Activated CD8-positive, alpha-beta T cell treated with anti-CD3 and anti-CD28 coated beads for 36 hours (primary cell): ENCODE measurements at regions of chr19 and their contacts with region 1.

Region 1: DNA sequence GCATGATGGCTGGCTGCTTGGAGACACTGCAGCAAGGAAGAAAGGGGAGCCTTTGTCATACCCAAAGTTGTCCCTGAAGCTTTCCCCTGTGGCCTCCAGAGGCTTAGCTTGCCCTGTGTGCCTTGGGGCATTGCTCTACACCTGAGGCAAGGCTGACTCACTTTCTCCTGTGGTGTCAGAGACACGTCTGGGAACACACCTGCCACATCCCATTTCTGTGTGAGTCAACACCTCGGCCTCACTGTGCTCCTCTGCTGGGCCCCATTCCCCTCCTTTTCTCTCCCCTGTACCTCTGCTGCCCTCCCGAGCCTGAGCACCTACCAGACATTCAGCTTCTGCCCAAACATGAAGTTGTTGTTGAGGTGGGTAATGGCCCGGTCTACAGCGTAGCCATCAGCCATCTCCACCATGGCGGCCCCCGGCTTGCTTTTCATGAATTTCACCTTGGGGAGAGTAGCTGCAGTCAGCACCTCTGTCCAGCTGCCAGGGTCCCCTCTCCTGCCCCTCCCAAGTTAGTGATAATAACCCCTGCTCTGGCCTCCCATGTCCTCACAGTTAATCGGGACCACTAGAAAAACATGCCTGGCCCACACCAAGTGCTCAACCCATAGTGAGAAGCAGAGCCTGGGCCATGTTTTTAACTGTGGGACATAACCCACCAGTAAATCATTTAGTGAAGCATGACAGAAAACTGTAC is 7.1 kb upstream of the ECH1 start:
- DNase-seq: peak; percentile 81
- ATAC-seq: peak; percentile 62
- H3K4me3 Mint-ChIP-seq: no peak overlapping the region
- H3K27ac Mint-ChIP-seq: peak overlapping the region; percentile 92
- H3K4me1 Mint-ChIP-seq: peaks cover 57% of the 10 kb centered on the region
- H3K27me3 Mint-ChIP-seq: no peaks in the 10 kb centered on the region
- CTCF ChIP-seq: no peak

Region 2: DNA sequence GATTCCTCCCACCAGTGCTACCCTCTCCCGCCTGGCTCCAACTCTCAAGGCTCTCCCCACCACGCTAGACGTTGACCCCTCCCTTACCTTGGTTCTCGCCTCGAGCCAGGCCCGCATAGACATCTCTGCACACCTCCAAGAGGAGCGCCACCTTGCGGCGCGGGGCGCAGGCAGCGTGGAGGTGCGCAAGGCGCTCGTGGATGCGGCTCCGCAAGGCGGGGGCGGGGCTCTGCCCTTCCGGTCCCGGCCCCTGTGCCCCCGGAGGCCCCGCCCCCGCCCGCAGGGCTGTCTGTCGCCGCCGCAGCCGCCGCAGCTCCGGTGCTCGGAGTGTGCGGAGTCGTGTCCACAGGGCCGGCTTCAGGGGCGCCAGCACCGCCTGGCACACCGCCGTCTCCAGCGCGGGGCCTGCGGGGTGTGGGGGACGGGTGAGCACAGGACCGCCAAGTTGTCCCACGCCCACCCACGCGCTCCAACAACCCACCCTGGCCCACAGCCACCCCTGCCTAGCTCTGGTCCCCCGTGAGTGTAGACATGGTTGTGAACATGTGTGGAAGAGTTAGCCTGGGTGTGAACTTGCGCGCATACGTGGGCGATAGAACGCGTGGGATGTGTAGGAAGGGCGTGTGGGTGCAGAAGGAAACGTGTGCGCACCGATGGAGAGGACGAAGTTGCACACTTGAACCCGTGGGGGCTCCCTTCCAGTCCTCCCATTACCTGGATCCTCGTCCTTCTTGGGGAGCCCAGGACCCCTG is 31.3 kb after region 1 on chr19:
- CTCF ChIA-PET with region 1: interaction called, 4 read pairs
- POLR2A ChIA-PET with region 1: interaction called, 22 read pairs
- intact Hi-C with region 1: no loop called
- DNase-seq: peak; percentile 95
- ATAC-seq: peak; percentile 83
- H3K4me3 Mint-ChIP-seq: peak overlapping the region; percentile 85
- H3K27ac Mint-ChIP-seq: peak overlapping the region; percentile 92
- H3K4me1 Mint-ChIP-seq: peaks cover 43% of the 10 kb centered on the region
- H3K27me3 Mint-ChIP-seq: no peaks in the 10 kb centered on the region
- CTCF ChIP-seq: peak; percentile 90

Region 3: GRCh38 chr19:38877781-38878574 is 39.3 kb after region 1 on chr19 and contains the start of gene RINL:
- CTCF ChIA-PET with region 1: no interaction called
- POLR2A ChIA-PET with region 1: interaction called, 15 read pairs
- intact Hi-C with region 1: no loop called
- DNase-seq: peak; percentile 86
- ATAC-seq: peak; percentile 93
- H3K4me3 Mint-ChIP-seq: peak within 1 kb of the TSS; percentile 95
- H3K27ac Mint-ChIP-seq: peak within 1 kb of the TSS; percentile 98
- H3K4me1 Mint-ChIP-seq: peaks cover 34% of the 10 kb centered on the region
- H3K27me3 Mint-ChIP-seq: no peaks in the 10 kb centered on the region
- CTCF ChIP-seq: no peak
- total RNA-seq, gene RINL: 85.5 to 87.7 TPM